Aorta (tissue), 5 donors: ENCODE measurements at regions of chr17 and their contacts with region 1.

Region 1: DNA sequence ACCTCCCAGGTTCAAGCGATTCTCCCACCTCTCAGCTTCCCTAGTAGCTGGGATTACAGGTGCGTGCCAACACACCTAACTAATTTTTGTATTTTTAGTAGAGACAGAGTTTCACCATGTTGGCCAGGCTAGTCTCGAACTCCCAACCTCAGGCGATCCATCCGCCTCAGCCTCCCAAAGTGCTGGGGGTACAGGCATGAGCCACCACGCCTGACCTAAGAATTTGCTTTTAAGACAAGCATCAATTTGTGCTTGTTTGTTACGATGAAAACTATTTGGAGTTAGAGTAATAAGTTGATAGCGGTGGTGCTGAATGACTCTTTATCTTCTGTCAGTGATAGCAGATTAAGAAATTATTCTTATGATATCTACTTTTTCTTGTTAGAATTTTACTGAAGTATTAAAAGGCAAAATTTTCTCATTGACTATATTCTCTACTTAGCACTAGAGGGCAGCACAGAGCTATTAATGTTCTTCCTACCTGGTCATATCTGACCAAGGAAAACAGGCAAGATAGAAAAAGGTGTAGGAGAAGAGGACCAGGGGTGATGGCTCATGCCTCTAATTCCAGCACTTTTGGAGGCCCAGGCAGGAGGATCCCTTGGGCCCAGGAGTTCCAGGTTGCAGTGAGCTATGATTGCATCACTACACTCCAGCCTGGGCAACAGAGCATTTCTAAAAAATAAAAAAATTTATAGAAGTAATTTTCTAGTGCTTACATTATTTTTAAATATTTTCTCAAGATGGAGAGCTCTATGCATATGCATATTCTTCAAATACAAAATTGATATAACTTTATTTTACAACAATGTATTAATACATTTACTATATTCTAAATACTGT is 24.5 kb downstream of the STXBP4 start:
- DNase-seq: no peak
- ATAC-seq: no peak
- H3K4me3 ChIP-seq: no peak overlapping the region
- H3K27ac ChIP-seq: no peak overlapping the region
- H3K4me1 ChIP-seq: no peaks in the 10 kb centered on the region
- H3K27me3 ChIP-seq: no peaks in the 10 kb centered on the region

Region 2: GRCh38 chr17:55295411-55296170 is 302.6 kb after region 1 on chr17:
- intact Hi-C with region 1: loop called in 1 of 2 experiments (anchors 5 kb)
- DNase-seq: no peak
- ATAC-seq: peak; percentile 88
- H3K4me3 ChIP-seq: no peak overlapping the region
- H3K27ac ChIP-seq: peak overlapping the region; percentile 69 to 77
- H3K4me1 ChIP-seq: peaks cover 0 to 4% of the 10 kb centered on the region in 2 donors
- H3K27me3 ChIP-seq: no peaks in the 10 kb centered on the region

Region 3: GRCh38 chr17:55348749-55349354 is 355.8 kb after region 1 on chr17:
- intact Hi-C with region 1: loop called (anchors 5 kb)
- DNase-seq: no peak
- ATAC-seq: peak; percentile 83
- H3K4me3 ChIP-seq: no peak overlapping the region
- H3K27ac ChIP-seq: no peak overlapping the region
- H3K4me1 ChIP-seq: no peaks in the 10 kb centered on the region
- H3K27me3 ChIP-seq: no peaks in the 10 kb centered on the region

Region 4: GRCh38 chr17:55356434-55357328 is 363.7 kb after region 1 on chr17:
- intact Hi-C with region 1: loop called in 1 of 2 experiments (anchors 5 kb)
- DNase-seq: peak in 1 of 2 donors; percentile 72
- ATAC-seq: peak; percentile 79
- H3K4me3 ChIP-seq: no peak overlapping the region
- H3K27ac ChIP-seq: no peak overlapping the region
- H3K4me1 ChIP-seq: no peaks in the 10 kb centered on the region
- H3K27me3 ChIP-seq: no peaks in the 10 kb centered on the region